Body of pancreas (tissue), 4 donors: ENCODE measurements at regions of chr18 and their contacts with region 1.

Region 1: GRCh38 chr18:13481820-13482617 is 244.3 kb downstream of the FAM210A start:
- DNase-seq: no peak
- ATAC-seq: no peak
- H3K4me3 ChIP-seq: no peak overlapping the region
- H3K27ac ChIP-seq: no peak overlapping the region
- H3K4me1 ChIP-seq: no peaks in the 10 kb centered on the region
- H3K27me3 ChIP-seq: no peaks in the 10 kb centered on the region
- CTCF ChIP-seq: no peak
- POLR2A ChIP-seq: no peak

Region 2: DNA sequence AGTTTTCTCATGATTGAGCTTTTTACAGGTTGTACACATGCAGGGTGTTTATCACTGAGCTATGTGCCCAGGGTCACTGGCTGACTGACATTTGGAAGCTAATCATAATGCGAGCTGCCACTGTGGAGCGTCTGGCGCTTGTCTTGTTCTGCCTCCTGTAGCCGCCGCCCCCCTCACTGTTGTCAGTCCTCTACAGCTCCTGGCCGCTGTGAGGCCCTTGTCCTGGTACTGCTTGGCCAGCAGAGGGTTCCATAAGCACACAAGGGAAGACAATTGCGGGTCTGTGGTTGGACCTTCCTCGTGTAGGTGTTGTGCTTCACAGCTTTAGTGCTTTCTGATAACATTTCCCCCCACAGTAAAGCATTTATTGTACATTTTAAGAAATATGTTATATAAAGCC is 369.0 kb before region 1 on chr18:
- intact Hi-C with region 1: no loop called
- DNase-seq: peak; percentile 43 to 75 (median 55)
- ATAC-seq: peak; percentile 53
- H3K4me3 ChIP-seq: no peak overlapping the region
- H3K27ac ChIP-seq: no peak overlapping the region
- H3K4me1 ChIP-seq: peaks cover 6% of the 10 kb centered on the region
- H3K27me3 ChIP-seq: no peaks in the 10 kb centered on the region
- CTCF ChIP-seq: peak in 5 of 7 experiments; percentile 24 to 54 (median 44)
- POLR2A ChIP-seq: no peak

Region 3: GRCh38 chr18:13425462-13426133 is 56.4 kb before region 1 on chr18:
- intact Hi-C with region 1: loop called (anchors 10 kb)
- DNase-seq: no peak
- ATAC-seq: no peak
- H3K4me3 ChIP-seq: no peak overlapping the region
- H3K27ac ChIP-seq: no peak overlapping the region
- H3K4me1 ChIP-seq: no peaks in the 10 kb centered on the region
- H3K27me3 ChIP-seq: no peaks in the 10 kb centered on the region
- CTCF ChIP-seq: no peak
- POLR2A ChIP-seq: no peak

Region 4: GRCh38 chr18:13548966-13549879 is 67.2 kb after region 1 on chr18:
- intact Hi-C with region 1: loop called (anchors 10 kb)
- DNase-seq: peak in 1 of 4 donors; percentile 42
- ATAC-seq: no peak
- H3K4me3 ChIP-seq: no peak overlapping the region
- H3K27ac ChIP-seq: peak overlapping the region in 1 of 4 donors; percentile 49
- H3K4me1 ChIP-seq: peaks cover 14% of the 10 kb centered on the region
- H3K27me3 ChIP-seq: no peaks in the 10 kb centered on the region
- CTCF ChIP-seq: no peak
- POLR2A ChIP-seq: peak in 1 of 3 donors; percentile 19